ENCODE measurements at regions of chr9 and their contacts with region 1.

Region 1: GRCh38 chr9:72952914-72953313 is at the start of gene ALDH1A1:
- DNase-seq: no peak
- ATAC-seq: peak; percentile 74
- H3K4me3 ChIP-seq: peak within 1 kb of the TSS; percentile 94 to 99
- H3K27ac ChIP-seq: peak within 1 kb of the TSS; percentile 68 to 76
- H3K4me1 ChIP-seq: peaks cover 0 to 1% of the 10 kb centered on the region in 2 donors
- H3K27me3 ChIP-seq: no peaks in the 10 kb centered on the region
- total RNA-seq, gene ALDH1A1: 107 to 118 TPM

Region 2: GRCh38 chr9:72718503-72718902 is 234.4 kb before region 1 on chr9:
- intact Hi-C with region 1: no loop called
- DNase-seq: no peak
- ATAC-seq: no peak
- H3K4me3 ChIP-seq: no peak overlapping the region
- H3K27ac ChIP-seq: no peak overlapping the region
- H3K4me1 ChIP-seq: no peaks in the 10 kb centered on the region
- H3K27me3 ChIP-seq: no peaks in the 10 kb centered on the region

Region 3: DNA sequence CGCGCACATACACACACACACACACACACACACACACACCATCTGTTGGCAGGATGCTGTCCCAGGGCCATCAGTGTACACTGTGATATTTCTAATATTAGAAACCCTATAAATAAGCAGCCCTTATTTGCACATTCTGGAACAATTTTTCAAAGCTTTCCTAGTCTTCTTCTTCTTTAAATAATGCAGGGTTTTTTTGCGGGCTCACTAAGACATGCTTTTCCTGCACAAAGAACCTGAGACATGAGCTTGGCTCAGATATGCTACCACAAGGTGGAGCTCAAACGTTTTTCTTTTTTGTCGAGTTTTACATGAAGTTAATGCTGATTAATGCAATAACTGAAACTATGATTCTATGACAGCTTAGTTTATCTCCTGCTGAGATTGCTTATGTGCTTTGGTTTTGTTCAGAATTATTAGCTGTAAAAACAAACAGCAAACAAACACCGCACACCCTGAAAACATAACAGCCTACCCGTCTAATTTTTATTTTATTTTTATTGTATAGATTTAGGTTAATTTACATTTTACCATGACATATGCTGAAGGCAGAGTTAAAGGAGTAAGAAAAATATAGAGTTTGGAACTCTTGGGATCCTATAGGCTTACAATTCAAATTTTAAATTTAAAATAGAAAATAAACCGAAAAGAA is 95.8 kb before region 1 on chr9:
- intact Hi-C with region 1: no loop called
- DNase-seq: no peak
- ATAC-seq: peak; percentile 88
- H3K4me3 ChIP-seq: no peak overlapping the region
- H3K27ac ChIP-seq: no peak overlapping the region
- H3K4me1 ChIP-seq: peaks cover 2 to 11% of the 10 kb centered on the region in 2 donors
- H3K27me3 ChIP-seq: no peaks in the 10 kb centered on the region

Region 4: DNA sequence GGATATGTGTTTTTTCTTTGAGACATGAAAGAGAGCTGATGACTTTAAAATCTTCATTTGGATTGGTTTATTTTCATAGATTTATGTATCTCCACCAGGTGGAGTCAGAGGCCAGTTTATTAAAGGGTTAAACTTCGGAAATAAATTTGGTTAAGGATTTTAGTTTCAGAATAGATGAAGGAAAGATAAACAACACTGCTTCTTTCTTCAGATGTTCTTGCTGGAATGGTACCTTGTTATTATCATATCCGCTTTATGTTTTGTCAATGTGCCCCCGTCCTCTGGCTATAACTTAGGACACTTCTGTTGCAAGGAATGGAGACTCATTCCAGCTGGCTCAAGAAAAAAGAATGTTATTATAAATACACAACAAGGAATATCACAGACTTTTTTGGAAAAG is 81.2 kb before region 1 on chr9:
- intact Hi-C with region 1: loop called in 1 of 2 experiments (anchors 10 kb)
- DNase-seq: no peak
- ATAC-seq: no peak
- H3K4me3 ChIP-seq: no peak overlapping the region
- H3K27ac ChIP-seq: no peak overlapping the region
- H3K4me1 ChIP-seq: no peaks in the 10 kb centered on the region
- H3K27me3 ChIP-seq: no peaks in the 10 kb centered on the region

Region 5: GRCh38 chr9:73011181-73011750 is 58.4 kb after region 1 on chr9:
- intact Hi-C with region 1: loop called (anchors 5 kb)
- DNase-seq: no peak
- ATAC-seq: peak; percentile 90
- H3K4me3 ChIP-seq: no peak overlapping the region
- H3K27ac ChIP-seq: peak overlapping the region; percentile 82 to 90
- H3K4me1 ChIP-seq: no peaks in the 10 kb centered on the region
- H3K27me3 ChIP-seq: no peaks in the 10 kb centered on the region